Dorsolateral prefrontal cortex (tissue), 120 donors: ENCODE measurements at regions of chr17 and their contacts with region 1.

Region 1: GRCh38 chr17:51533821-51534220 is 273.5 kb downstream of the UTP18 start:
- DNase-seq: no peak
- H3K4me3 ChIP-seq: no peak overlapping the region
- H3K27ac ChIP-seq: no peak overlapping the region
- H3K27me3 ChIP-seq: no peaks in the 10 kb centered on the region
- CTCF ChIP-seq: no peak

Region 2: GRCh38 chr17:51260125-51260880 is 273.5 kb before region 1 on chr17 and contains the start of gene UTP18:
- intact Hi-C with region 1: no loop called
- DNase-seq: peak; percentile 91 to 97 (median 95)
- H3K4me3 ChIP-seq: peak within 1 kb of the TSS; percentile 59 to 100 (median 98)
- H3K27ac ChIP-seq: peak within 1 kb of the TSS; percentile 95 to 100 (median 99)
- H3K27me3 ChIP-seq: no peaks in the 10 kb centered on the region
- CTCF ChIP-seq: peak in 4 of 56 donors; percentile 7 to 15 (median 12)
- total RNA-seq, gene UTP18: 21.6 to 44.1 (median 32.9) TPM

Region 3: DNA sequence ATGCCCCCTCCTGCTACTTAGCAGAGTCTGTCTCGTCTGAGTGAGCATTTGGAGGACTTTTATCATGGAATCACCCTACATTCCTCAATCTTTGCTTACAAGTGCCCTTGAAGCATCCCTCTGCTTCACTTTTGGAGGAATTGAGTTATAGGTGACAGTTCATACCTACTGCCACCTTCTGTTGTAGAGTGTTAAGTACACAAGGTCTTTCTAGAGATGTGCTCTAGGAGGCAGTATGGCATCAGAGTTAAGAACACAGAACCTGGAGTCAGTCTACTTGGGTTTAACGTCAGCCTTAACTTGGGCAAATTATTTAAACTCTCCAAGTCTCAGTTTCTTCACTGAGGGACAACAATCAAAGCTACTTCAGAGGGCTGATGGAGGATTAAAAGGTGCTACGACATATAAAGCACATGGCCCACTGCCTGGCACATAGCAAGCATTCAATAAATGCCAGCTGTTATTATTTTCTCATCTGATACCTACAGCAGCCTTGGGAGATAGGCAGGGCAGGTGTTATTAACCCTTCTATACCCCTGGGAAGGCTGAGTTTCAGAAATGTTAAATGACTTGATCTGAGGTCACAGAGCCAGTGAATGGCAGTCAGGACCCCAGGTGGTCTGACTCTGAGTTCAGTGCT is 211.3 kb before region 1 on chr17:
- intact Hi-C with region 1: loop called in 1 of 2 experiments (anchors 2 kb)
- DNase-seq: no peak
- H3K4me3 ChIP-seq: no peak overlapping the region
- H3K27ac ChIP-seq: no peak overlapping the region
- H3K27me3 ChIP-seq: no peaks in the 10 kb centered on the region
- CTCF ChIP-seq: peak in 54 of 56 donors; percentile 25 to 87 (median 66)